Naive thymus-derived CD4-positive, alpha-beta T cell (primary cell): ENCODE measurements at regions of chr9 and their contacts with region 1.

Region 1: GRCh38 chr9:26756881-26757280 is 135.7 kb downstream of the CAAP1 start:
- DNase-seq: no peak
- ATAC-seq: no peak
- H3K4me3 ChIP-seq: no peak overlapping the region
- H3K4me3 Mint-ChIP-seq: no peak overlapping the region
- H3K27ac ChIP-seq: no peak overlapping the region
- H3K27ac Mint-ChIP-seq: no peak overlapping the region
- H3K4me1 ChIP-seq: no peaks in the 10 kb centered on the region
- H3K4me1 Mint-ChIP-seq: no peaks in the 10 kb centered on the region
- H3K27me3 ChIP-seq: no peaks in the 10 kb centered on the region
- H3K27me3 Mint-ChIP-seq: peaks cover 0 to 11% (median 0%) of the 10 kb centered on the region in 5 donors

Region 2: GRCh38 chr9:26131886-26132285 is 625.0 kb before region 1 on chr9:
- CTCF ChIA-PET with region 1: no interaction called
- POLR2A ChIA-PET with region 1: no interaction called
- intact Hi-C with region 1: no loop called
- DNase-seq: no peak
- ATAC-seq: no peak
- H3K4me3 ChIP-seq: no peak overlapping the region
- H3K4me3 Mint-ChIP-seq: no peak overlapping the region
- H3K27ac ChIP-seq: no peak overlapping the region
- H3K27ac Mint-ChIP-seq: no peak overlapping the region
- H3K4me1 ChIP-seq: no peaks in the 10 kb centered on the region
- H3K4me1 Mint-ChIP-seq: no peaks in the 10 kb centered on the region
- H3K27me3 ChIP-seq: no peaks in the 10 kb centered on the region
- H3K27me3 Mint-ChIP-seq: no peaks in the 10 kb centered on the region

Region 3: GRCh38 chr9:26637101-26637500 is 119.8 kb before region 1 on chr9:
- CTCF ChIA-PET with region 1: no interaction called
- POLR2A ChIA-PET with region 1: no interaction called
- intact Hi-C with region 1: no loop called
- DNase-seq: no peak
- ATAC-seq: no peak
- H3K4me3 ChIP-seq: no peak overlapping the region
- H3K4me3 Mint-ChIP-seq: no peak overlapping the region
- H3K27ac ChIP-seq: no peak overlapping the region
- H3K27ac Mint-ChIP-seq: no peak overlapping the region
- H3K4me1 ChIP-seq: no peaks in the 10 kb centered on the region
- H3K4me1 Mint-ChIP-seq: no peaks in the 10 kb centered on the region
- H3K27me3 ChIP-seq: no peaks in the 10 kb centered on the region
- H3K27me3 Mint-ChIP-seq: peaks cover 0 to 7% (median 0%) of the 10 kb centered on the region in 5 donors

Region 4: GRCh38 chr9:26779072-26779471 is 22.2 kb after region 1 on chr9:
- CTCF ChIA-PET with region 1: no interaction called
- POLR2A ChIA-PET with region 1: no interaction called
- intact Hi-C with region 1: loop called in 1 of 2 experiments (anchors 2 kb)
- DNase-seq: no peak
- ATAC-seq: no peak
- H3K4me3 ChIP-seq: no peak overlapping the region
- H3K4me3 Mint-ChIP-seq: no peak overlapping the region
- H3K27ac ChIP-seq: no peak overlapping the region
- H3K27ac Mint-ChIP-seq: no peak overlapping the region
- H3K4me1 ChIP-seq: no peaks in the 10 kb centered on the region
- H3K4me1 Mint-ChIP-seq: no peaks in the 10 kb centered on the region
- H3K27me3 ChIP-seq: no peaks in the 10 kb centered on the region
- H3K27me3 Mint-ChIP-seq: peaks cover 0 to 9% (median 0%) of the 10 kb centered on the region in 5 donors

Region 5: GRCh38 chr9:26913138-26913668 is 156.3 kb after region 1 on chr9:
- CTCF ChIA-PET with region 1: no interaction called
- POLR2A ChIA-PET with region 1: no interaction called
- intact Hi-C with region 1: no loop called
- DNase-seq: no peak
- ATAC-seq: no peak
- H3K4me3 ChIP-seq: no peak overlapping the region
- H3K4me3 Mint-ChIP-seq: no peak overlapping the region
- H3K27ac ChIP-seq: no peak overlapping the region
- H3K27ac Mint-ChIP-seq: no peak overlapping the region
- H3K4me1 ChIP-seq: no peaks in the 10 kb centered on the region
- H3K4me1 Mint-ChIP-seq: peaks cover 0 to 3% (median 0%) of the 10 kb centered on the region in 7 donors
- H3K27me3 ChIP-seq: no peaks in the 10 kb centered on the region
- H3K27me3 Mint-ChIP-seq: no peaks in the 10 kb centered on the region